OCI-LY7 (cell line): ENCODE measurements at regions of chr15 and their contacts with region 1.

Region 1: DNA sequence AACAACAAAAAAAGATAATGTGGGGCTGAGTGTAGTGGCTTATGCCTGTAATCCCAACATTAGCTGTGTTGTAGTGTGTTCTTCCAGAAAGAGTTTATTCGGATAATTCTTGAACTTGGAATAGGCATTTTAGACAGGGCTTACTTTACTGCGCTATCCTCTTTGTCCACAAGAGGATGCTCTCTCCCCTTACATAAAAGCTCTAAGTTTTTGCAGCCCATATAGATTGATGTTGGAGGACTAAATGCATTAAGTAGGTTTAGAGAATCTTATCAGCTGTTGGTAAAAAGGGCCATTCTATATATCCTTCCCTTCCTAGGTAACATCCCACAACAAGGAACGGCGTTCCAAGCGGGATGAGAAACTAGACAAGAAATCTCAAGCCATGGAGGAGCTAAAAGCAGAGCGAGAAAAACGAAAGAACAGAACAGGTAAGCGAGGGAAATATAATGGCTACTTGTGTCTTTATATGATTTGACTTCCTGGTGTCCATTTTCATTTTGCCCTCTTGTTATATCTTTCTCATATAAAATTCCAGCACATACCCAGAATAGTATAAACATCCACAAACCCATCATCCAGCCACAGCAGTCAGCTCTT is 27.8 kb upstream of the ITPKA start:
- DNase-seq: peak; percentile 54
- H3K4me3 ChIP-seq: no peak overlapping the region
- H3K27ac ChIP-seq: no peak overlapping the region
- H3K4me1 ChIP-seq: no peaks in the 10 kb centered on the region
- CTCF ChIP-seq: peak; percentile 99

Region 2: DNA sequence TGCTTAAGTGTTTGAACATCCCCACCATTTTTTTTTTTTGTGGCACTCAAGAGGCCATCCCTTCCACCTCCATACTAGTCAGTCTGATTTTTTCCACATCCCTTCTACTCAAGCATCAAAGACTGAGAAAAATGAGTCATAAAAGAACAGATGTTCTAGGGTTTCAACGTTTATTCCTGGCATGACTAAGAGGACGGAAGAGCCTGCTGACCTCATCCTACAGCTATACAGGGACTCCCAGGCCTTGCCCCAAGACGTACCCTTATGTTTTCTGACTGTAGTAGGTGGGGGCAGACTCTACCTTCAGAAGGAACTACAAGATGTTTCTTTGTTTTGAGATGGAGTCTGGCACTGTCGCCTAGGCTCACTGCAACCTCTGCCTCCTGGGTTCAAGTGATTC is 24.4 kb after region 1 on chr15:
- CTCF ChIA-PET with region 1: no interaction called
- POLR2A ChIA-PET with region 1: no interaction called
- intact Hi-C with region 1: no loop called
- DNase-seq: no peak
- H3K4me3 ChIP-seq: no peak overlapping the region
- H3K27ac ChIP-seq: no peak overlapping the region
- H3K4me1 ChIP-seq: peaks cover 22% of the 10 kb centered on the region
- CTCF ChIP-seq: no peak

Region 3: DNA sequence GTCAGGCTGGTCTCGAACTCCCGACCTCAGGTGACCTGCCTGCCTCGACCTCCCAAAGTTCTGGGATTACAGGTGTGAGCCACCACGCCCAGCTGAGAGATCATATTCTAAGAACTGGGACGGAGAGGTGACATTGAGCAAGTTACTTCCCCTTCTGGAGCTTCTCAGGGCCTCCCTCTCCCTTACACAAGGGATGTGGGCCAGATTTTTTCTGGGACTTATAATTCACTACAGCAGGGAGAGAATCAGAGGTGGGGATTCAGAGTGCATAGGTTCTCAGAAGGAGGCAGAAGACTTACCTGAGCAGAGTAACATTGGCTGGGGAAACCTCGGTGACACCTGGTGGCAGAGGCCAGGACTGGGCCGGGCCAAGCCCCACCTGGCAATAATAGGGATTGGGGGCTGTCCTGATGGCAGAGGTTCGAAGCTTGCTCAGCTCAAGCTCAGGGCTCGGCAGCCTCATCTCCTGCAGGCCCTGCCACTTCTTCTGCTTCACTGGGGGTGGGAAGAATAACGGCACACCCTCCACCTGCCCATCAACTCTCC is 40.9 kb after region 1 on chr15:
- CTCF ChIA-PET with region 1: no interaction called
- POLR2A ChIA-PET with region 1: no interaction called
- intact Hi-C with region 1: loop called (anchors 5 kb)
- DNase-seq: peak; percentile 19
- H3K4me3 ChIP-seq: no peak overlapping the region
- H3K27ac ChIP-seq: no peak overlapping the region
- H3K4me1 ChIP-seq: no peaks in the 10 kb centered on the region
- CTCF ChIP-seq: peak; percentile 55

Region 4: GRCh38 chr15:41530363-41530956 is 64.5 kb after region 1 on chr15:
- CTCF ChIA-PET with region 1: no interaction called
- POLR2A ChIA-PET with region 1: no interaction called
- intact Hi-C with region 1: no loop called
- DNase-seq: peak; percentile 32
- H3K4me3 ChIP-seq: no peak overlapping the region
- H3K27ac ChIP-seq: peak overlapping the region; percentile 21
- H3K4me1 ChIP-seq: peaks cover 11% of the 10 kb centered on the region
- CTCF ChIP-seq: no peak